Activated CD4-positive, alpha-beta memory T cell treated with anti-CD3 and anti-CD28 coated beads, Interleukin-2, amount 10 ng/mL, durations not matched to agents 7 days and 5 days (primary cell): ENCODE measurements at regions of chr19 and their contacts with region 1.

Region 1: GRCh38 chr19:48738557-48739399 is 1.6 kb downstream of the RASIP1 start:
- DNase-seq: peak; percentile 94
- H3K4me3 Mint-ChIP-seq: peak overlapping the region; percentile 30
- H3K27ac Mint-ChIP-seq: no peak overlapping the region
- H3K4me1 Mint-ChIP-seq: peaks cover 22% of the 10 kb centered on the region
- H3K27me3 Mint-ChIP-seq: peaks cover 6% of the 10 kb centered on the region

Region 2: GRCh38 chr19:48674921-48675824 is 63.6 kb before region 1 on chr19:
- CTCF ChIA-PET with region 1: interaction called, 12 read pairs
- POLR2A ChIA-PET with region 1: no interaction called
- DNase-seq: peak; percentile 76
- H3K4me3 Mint-ChIP-seq: no peak overlapping the region
- H3K27ac Mint-ChIP-seq: no peak overlapping the region
- H3K4me1 Mint-ChIP-seq: peaks cover 5% of the 10 kb centered on the region
- H3K27me3 Mint-ChIP-seq: no peaks in the 10 kb centered on the region

Region 3: GRCh38 chr19:48713864-48714758 is 24.7 kb before region 1 on chr19:
- CTCF ChIA-PET with region 1: interaction called, 13 read pairs
- POLR2A ChIA-PET with region 1: interaction called, 3 read pairs
- DNase-seq: peak; percentile 99
- H3K4me3 Mint-ChIP-seq: peak overlapping the region; percentile 76
- H3K27ac Mint-ChIP-seq: peak overlapping the region; percentile 44
- H3K4me1 Mint-ChIP-seq: peaks cover 18% of the 10 kb centered on the region
- H3K27me3 Mint-ChIP-seq: no peaks in the 10 kb centered on the region

Region 4: DNA sequence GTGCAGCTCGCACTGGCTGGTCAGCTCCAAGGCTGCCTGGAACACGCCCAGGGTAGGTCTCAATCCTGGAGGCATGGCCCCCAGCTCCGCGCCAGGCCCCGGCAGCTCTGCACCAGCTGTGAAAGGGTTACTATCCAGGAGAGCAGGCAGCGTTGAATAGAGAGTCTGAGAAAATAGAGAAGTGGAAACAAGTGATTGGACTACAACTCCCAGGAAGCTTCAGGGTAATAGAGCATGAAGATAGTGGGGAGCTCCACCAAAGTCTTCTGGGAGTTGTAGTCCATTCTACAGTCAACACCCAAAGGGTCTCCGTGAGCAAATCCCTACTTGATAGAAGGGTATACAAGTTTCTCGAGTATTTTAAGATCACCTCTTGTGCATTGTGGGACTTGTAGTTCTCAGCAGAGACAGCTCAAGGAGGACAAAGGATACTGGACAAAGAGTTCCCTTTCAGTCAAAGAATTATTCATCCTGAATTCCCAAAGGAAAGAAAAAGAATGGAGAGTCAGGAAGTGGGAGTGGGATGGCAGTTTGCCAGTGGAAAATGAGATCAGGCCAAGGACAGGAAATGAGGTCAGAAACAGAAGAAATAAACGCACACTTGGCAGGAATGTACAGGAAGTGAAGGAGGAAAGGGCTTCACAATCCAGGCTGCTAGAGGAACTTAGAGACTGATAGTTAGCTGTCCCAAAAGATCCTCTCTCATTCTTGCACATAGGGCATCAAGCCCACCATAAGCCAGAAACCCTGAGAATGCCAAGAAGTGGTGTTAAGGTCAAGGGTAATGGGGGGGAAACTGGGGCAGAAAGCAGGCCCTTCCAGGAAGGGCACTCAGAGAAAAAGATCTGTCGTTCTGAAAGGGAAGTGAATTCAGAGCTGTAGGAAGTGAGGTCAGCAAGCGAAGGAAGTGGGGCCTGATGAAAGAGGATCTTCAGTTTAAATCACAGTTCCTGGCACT is 13.7 kb before region 1 on chr19:
- CTCF ChIA-PET with region 1: interaction called, 14 read pairs
- POLR2A ChIA-PET with region 1: interaction called, 11 read pairs
- DNase-seq: no peak
- H3K4me3 Mint-ChIP-seq: no peak overlapping the region
- H3K27ac Mint-ChIP-seq: peak overlapping the region; percentile 82
- H3K4me1 Mint-ChIP-seq: peaks cover 43% of the 10 kb centered on the region
- H3K27me3 Mint-ChIP-seq: no peaks in the 10 kb centered on the region